Caco-2 (cell line): ENCODE measurements at regions of chr9 and their contacts with region 1.

Region 1: GRCh38 chr9:77149879-77150278 is 27.5 kb upstream of the VPS13A start:
- DNase-seq: no peak
- H3K4me3 ChIP-seq: no peak overlapping the region
- H3K4me3 Mint-ChIP-seq: no peak overlapping the region
- H3K27ac Mint-ChIP-seq: no peak overlapping the region
- H3K4me1 ChIP-seq: no peaks in the 10 kb centered on the region
- H3K4me1 Mint-ChIP-seq: no peaks in the 10 kb centered on the region
- H3K27me3 ChIP-seq: no peaks in the 10 kb centered on the region
- H3K27me3 Mint-ChIP-seq: peaks cover 3% of the 10 kb centered on the region
- CTCF ChIP-seq: no peak

Region 2: DNA sequence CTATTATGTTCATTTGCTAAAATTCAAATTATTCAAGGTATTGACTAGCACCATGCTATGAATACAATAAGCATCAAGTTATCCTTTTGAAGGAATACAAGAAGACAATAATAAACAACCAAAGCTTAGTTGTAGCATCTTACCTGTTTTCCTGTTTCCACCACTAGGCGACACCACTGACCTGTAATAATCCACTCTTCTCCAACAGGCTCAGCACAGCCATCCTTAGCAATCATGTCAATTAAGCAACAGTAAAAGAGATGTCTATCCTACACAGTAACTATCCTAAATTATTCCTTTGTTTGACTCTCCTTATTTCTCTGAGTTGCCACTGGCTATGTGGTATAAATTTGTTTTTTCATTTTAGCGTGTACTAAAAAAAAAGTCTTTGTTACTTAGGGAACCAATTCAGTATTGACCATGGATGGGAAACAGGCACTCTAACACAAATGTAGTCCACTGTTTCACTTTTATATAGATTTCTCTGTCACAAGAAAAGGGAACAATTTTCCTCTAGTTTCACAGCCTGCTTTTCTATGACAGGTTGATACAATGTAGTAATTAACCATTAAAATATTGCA is 339.4 kb before region 1 on chr9:
- CTCF ChIA-PET with region 1: no interaction called
- POLR2A ChIA-PET with region 1: no interaction called
- intact Hi-C with region 1: loop called (anchors 2 kb)
- DNase-seq: peak; percentile 23 to 36
- H3K4me3 ChIP-seq: no peak overlapping the region
- H3K4me3 Mint-ChIP-seq: no peak overlapping the region
- H3K27ac Mint-ChIP-seq: no peak overlapping the region
- H3K4me1 ChIP-seq: no peaks in the 10 kb centered on the region
- H3K4me1 Mint-ChIP-seq: no peaks in the 10 kb centered on the region
- H3K27me3 ChIP-seq: no peaks in the 10 kb centered on the region
- H3K27me3 Mint-ChIP-seq: no peaks in the 10 kb centered on the region
- CTCF ChIP-seq: peak; percentile 10 to 33

Region 3: DNA sequence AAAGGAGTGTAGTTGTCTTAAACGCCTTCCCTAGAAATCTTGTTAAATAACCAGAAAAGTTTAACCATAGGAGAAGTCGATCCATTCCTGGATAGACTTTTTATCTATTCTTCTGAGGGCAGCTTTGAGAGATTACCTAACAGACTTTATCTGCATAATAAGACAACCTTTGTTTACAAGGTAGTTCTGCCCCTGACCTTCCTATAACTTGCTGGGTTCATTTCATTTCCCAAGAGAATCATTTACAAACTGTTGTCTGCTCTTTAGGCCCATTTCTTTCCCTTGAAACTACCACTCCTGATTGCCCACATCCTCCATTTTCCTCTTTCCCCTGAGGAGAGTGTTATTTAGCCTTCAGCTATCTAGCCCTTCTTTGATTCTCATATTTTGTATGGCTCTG is 38.5 kb before region 1 on chr9:
- CTCF ChIA-PET with region 1: no interaction called
- POLR2A ChIA-PET with region 1: no interaction called
- intact Hi-C with region 1: no loop called
- DNase-seq: no peak
- H3K4me3 ChIP-seq: no peak overlapping the region
- H3K4me3 Mint-ChIP-seq: no peak overlapping the region
- H3K27ac Mint-ChIP-seq: no peak overlapping the region
- H3K4me1 ChIP-seq: no peaks in the 10 kb centered on the region
- H3K4me1 Mint-ChIP-seq: no peaks in the 10 kb centered on the region
- H3K27me3 ChIP-seq: no peaks in the 10 kb centered on the region
- H3K27me3 Mint-ChIP-seq: no peaks in the 10 kb centered on the region
- CTCF ChIP-seq: no peak

Region 4: GRCh38 chr9:77131399-77131798 is 18.5 kb before region 1 on chr9:
- CTCF ChIA-PET with region 1: no interaction called
- POLR2A ChIA-PET with region 1: no interaction called
- intact Hi-C with region 1: no loop called
- DNase-seq: no peak
- H3K4me3 ChIP-seq: no peak overlapping the region
- H3K4me3 Mint-ChIP-seq: no peak overlapping the region
- H3K27ac Mint-ChIP-seq: no peak overlapping the region
- H3K4me1 ChIP-seq: no peaks in the 10 kb centered on the region
- H3K4me1 Mint-ChIP-seq: no peaks in the 10 kb centered on the region
- H3K27me3 ChIP-seq: no peaks in the 10 kb centered on the region
- H3K27me3 Mint-ChIP-seq: peaks cover 2% of the 10 kb centered on the region
- CTCF ChIP-seq: no peak

Region 5: DNA sequence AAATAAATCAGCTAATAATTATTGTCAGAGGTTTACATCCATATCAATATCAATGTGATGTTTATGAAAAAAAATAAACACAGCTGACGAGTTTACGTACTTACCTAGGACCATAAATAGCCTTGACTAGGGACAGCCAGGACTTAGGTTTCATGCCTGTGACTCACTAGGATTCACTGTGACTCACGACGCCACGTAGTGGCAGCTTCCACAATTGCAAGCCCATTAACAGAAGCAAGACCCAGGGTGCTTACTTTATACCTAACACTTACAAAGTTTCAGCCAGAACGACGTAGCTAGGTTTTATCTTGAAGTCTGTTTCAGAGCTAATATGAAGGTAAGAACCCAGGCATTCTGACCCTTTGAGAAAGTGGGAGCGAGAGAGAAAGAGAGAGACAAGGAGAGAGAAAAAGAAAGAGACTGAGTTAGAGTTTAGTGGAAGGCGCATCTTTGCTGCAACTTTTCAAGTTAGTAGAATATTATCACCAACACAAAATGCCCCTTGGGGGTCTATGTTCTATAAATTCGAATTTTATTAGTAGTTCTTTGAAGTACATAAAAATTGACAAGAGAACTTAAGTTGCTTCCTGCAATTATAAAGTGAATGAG is 307.1 kb after region 1 on chr9:
- CTCF ChIA-PET with region 1: no interaction called
- POLR2A ChIA-PET with region 1: no interaction called
- intact Hi-C with region 1: no loop called
- DNase-seq: peak; percentile 62 to 64
- H3K4me3 ChIP-seq: no peak overlapping the region
- H3K4me3 Mint-ChIP-seq: no peak overlapping the region
- H3K27ac Mint-ChIP-seq: no peak overlapping the region
- H3K4me1 ChIP-seq: no peaks in the 10 kb centered on the region
- H3K4me1 Mint-ChIP-seq: no peaks in the 10 kb centered on the region
- H3K27me3 ChIP-seq: no peaks in the 10 kb centered on the region
- H3K27me3 Mint-ChIP-seq: no peaks in the 10 kb centered on the region
- CTCF ChIP-seq: peak in 1 of 2 experiments; percentile 51